ENCODE measurements at regions of chr4 and their contacts with region 1.

Region 1: GRCh38 chr4:102780476-102781144 is 19.8 kb upstream of the MANBA start:
- DNase-seq: no peak
- H3K4me3 ChIP-seq: no peak overlapping the region
- H3K27ac ChIP-seq: no peak overlapping the region
- H3K27me3 ChIP-seq: no peaks in the 10 kb centered on the region
- CTCF ChIP-seq: no peak

Region 2: DNA sequence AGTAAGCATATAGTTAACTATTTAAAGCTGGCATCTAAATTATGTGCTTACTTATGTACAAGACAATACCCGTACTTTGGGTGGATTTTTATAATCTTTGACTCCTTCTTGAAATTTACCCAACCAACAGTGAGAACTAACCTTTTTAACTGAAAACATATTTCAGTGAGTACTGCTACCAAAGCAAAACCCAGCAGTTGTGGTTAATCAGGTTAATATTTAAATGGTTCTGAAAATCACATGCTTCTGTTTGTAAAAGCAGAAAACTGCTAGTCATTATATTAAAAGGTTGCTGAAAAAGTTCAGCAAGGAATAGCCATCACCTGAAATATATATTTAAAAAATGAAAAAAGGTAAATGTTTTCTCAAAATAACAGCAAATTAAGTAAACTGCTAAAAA is 26.7 kb after region 1 on chr4:
- intact Hi-C with region 1: loop called in 1 of 2 experiments (anchors 2 kb)
- DNase-seq: no peak
- H3K4me3 ChIP-seq: no peak overlapping the region
- H3K27ac ChIP-seq: peak overlapping the region in 4 of 59 donors; percentile 20 to 46 (median 34)
- H3K27me3 ChIP-seq: no peaks in the 10 kb centered on the region
- CTCF ChIP-seq: no peak

Region 3: GRCh38 chr4:102849579-102850104 is 69.0 kb after region 1 on chr4:
- intact Hi-C with region 1: no loop called
- DNase-seq: no peak
- H3K4me3 ChIP-seq: no peak overlapping the region
- H3K27ac ChIP-seq: no peak overlapping the region
- H3K27me3 ChIP-seq: no peaks in the 10 kb centered on the region
- CTCF ChIP-seq: no peak

Measured in dorsolateral prefrontal cortex (tissue), 120 donors.